MCF 10A (cell line): ENCODE measurements at regions of chr5 and their contacts with region 1.

Region 1: GRCh38 chr5:178786859-178787760 is 56.7 kb upstream of the ZNF354A start:
- DNase-seq: peak; percentile 96
- H3K4me3 Mint-ChIP-seq: peak overlapping the region; percentile 54
- H3K27ac Mint-ChIP-seq: peak overlapping the region; percentile 92
- H3K4me1 Mint-ChIP-seq: peaks cover 58% of the 10 kb centered on the region
- H3K27me3 Mint-ChIP-seq: no peaks in the 10 kb centered on the region
- CTCF ChIP-seq: peak; percentile 31

Region 2: GRCh38 chr5:178279725-178280438 is 507.2 kb before region 1 on chr5:
- CTCF ChIA-PET with region 1: no interaction called
- POLR2A ChIA-PET with region 1: no interaction called
- intact Hi-C with region 1: loop called (anchors 2 kb)
- DNase-seq: peak; percentile 87
- H3K4me3 Mint-ChIP-seq: no peak overlapping the region
- H3K27ac Mint-ChIP-seq: no peak overlapping the region
- H3K4me1 Mint-ChIP-seq: peaks cover 30% of the 10 kb centered on the region
- H3K27me3 Mint-ChIP-seq: no peaks in the 10 kb centered on the region
- CTCF ChIP-seq: peak; percentile 99

Region 3: DNA sequence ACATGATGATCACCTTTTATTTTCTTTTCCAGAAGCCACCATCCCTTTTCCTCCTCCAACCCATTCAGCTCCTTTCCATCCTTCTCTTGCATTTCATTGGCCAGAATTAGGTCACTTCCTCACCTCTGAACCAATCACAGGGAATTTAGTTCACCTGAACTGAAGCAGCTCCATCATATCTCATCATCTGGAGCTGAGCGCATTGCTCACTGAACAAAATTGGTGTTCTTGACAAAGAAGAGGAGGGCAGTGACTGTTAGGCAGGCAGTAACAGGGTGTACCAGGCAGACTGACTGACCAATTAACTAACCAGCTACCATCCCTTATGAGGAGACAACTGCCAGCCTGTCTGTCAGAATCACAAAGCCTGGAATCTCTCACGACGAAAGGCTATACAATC is 54.8 kb before region 1 on chr5:
- CTCF ChIA-PET with region 1: interaction called, 22 read pairs
- POLR2A ChIA-PET with region 1: interaction called, 62 read pairs
- intact Hi-C with region 1: loop called (anchors 1 kb)
- DNase-seq: no peak
- H3K4me3 Mint-ChIP-seq: no peak overlapping the region
- H3K27ac Mint-ChIP-seq: no peak overlapping the region
- H3K4me1 Mint-ChIP-seq: peaks cover 8% of the 10 kb centered on the region
- H3K27me3 Mint-ChIP-seq: no peaks in the 10 kb centered on the region
- CTCF ChIP-seq: no peak

Region 4: DNA sequence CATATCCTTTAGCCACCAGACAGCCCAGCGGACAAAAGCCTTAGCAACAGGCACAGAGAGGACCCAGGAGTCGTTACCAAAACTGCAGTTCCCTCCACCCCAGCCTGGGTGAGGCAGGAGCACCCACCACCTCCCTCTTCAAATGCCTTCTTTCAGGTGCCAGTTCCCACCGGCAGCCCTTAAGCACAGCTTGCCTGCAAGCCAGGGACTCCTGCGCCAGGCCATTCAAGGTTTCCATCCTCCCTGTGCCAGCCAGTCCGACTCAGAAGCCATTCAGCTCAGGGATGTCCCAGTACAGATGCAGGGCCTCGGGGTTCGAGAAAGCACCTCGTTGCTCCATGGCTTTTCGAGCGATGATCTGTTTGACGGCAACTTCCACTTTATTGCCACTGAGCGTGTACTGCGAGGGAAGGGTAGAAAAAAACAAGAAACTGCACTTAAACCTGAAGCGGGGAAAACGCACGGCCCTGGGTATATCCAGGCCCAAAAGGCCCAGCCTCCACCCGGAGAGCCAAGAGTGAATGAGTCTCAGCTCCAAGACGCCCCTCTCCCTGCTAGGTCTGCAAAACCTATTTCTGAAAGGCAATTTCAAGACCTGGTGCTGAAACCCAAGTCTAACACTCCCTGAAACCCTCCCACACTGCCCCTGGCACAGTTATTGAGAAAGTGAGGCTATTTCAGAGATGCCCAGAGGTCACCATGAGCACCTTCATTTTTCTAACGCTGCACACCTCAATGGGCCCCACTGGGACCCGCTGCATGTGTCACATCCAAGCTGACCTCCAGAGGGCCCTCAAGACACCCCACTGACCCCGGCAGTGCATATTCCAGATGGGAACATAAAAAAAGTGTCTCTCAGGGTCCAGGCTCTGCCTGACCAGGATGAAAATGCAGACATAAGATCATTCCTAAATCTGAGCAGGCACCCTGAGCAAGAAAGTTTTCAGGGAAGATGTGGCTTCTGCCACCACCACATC is 19.9 kb before region 1 on chr5:
- CTCF ChIA-PET with region 1: interaction called, 11 read pairs
- POLR2A ChIA-PET with region 1: interaction called, 61 read pairs
- intact Hi-C with region 1: no loop called
- DNase-seq: no peak
- H3K4me3 Mint-ChIP-seq: no peak overlapping the region
- H3K27ac Mint-ChIP-seq: no peak overlapping the region
- H3K4me1 Mint-ChIP-seq: no peaks in the 10 kb centered on the region
- H3K27me3 Mint-ChIP-seq: no peaks in the 10 kb centered on the region
- CTCF ChIP-seq: no peak

Region 5: GRCh38 chr5:178831049-178831448 is 43.9 kb after region 1 on chr5:
- CTCF ChIA-PET with region 1: interaction called, 16 read pairs
- POLR2A ChIA-PET with region 1: interaction called, 116 read pairs
- intact Hi-C with region 1: loop called (anchors 5 kb)
- DNase-seq: no peak
- H3K4me3 Mint-ChIP-seq: no peak overlapping the region
- H3K27ac Mint-ChIP-seq: no peak overlapping the region
- H3K4me1 Mint-ChIP-seq: peaks cover 17% of the 10 kb centered on the region
- H3K27me3 Mint-ChIP-seq: no peaks in the 10 kb centered on the region
- CTCF ChIP-seq: no peak

Region 6: DNA sequence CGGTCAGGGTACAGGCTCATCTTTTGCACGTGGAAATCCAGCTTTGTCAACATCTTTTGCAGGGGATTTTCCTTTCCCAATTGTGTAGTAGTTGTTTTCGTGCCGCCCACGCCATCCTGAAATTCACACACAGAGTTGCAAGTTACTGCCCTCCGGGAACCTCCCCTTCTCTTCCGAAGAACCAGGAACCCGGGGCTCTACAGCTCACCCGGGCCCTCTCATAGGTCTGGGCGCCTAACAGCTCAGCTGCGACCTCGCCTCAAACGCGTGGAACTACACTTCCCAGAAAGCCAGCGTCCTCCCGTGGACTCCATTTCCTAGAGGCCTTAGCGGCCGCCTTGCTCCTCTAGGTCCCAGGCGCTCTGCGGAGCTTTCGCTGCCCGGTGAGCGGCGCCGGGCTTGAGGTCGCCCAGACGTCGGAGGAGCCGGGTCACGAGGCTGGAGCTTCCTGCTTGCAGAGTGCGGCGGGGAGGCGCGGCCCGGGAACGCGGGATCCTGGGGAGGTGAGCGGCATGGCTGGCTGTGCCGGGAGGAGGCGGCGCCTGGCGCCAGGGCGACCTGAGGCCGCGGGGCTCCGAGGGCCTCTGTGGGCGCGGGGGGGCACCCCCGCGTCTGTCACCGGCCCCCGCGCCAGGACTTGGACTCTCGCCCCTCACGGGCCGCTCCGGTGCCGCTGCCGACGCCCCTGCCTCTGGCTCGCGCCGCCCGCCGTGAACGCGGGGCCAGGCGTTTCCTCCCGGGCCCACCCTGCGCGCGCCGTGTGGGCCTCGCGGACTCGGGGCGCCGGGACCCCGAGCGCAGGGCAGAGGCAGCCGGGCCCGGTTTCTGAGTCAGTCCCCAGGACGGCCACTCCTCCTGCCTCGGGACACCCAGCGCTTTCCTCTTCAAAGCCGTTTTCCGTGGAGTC is 72.8 kb after region 1 on chr5 and contains the start of gene ZNF354B:
- CTCF ChIA-PET with region 1: interaction called, 4 read pairs
- POLR2A ChIA-PET with region 1: interaction called, 14 read pairs
- intact Hi-C with region 1: loop called (anchors 2 kb)
- DNase-seq: peak; percentile 98
- H3K4me3 Mint-ChIP-seq: peak within 1 kb of the TSS; percentile 77
- H3K27ac Mint-ChIP-seq: peak within 1 kb of the TSS; percentile 61
- H3K4me1 Mint-ChIP-seq: peaks cover 26% of the 10 kb centered on the region
- H3K27me3 Mint-ChIP-seq: no peaks in the 10 kb centered on the region
- CTCF ChIP-seq: peak; percentile 15
- total RNA-seq, gene ZNF354B: 24.4 and 24.8 TPM in 2 replicates